Mammary epithelial cell (primary cell): ENCODE measurements at regions of chr1 and their contacts with region 1.

Region 1: DNA sequence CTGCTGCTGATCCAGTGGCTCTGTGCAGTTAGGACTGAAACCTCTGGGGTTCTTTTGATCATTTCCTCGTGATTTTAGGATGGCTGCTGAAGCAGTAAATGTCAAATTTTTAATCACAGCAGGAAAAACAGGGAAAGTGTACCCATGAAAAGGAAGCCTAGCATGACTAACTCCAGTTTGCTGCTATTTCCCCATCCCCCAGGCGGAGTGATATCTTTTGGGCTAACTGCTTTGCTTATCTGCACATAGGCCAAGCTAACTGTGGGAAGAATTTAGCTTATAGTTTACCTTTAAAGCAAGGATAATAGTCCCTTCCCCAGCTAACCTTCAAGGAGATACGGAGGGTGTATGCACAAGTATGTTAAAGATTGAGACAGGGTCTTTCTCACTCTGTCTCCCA is 149.8 kb upstream of the TNR start:
- DNase-seq: no peak
- H3K4me3 ChIP-seq: no peak overlapping the region
- H3K27ac ChIP-seq: no peak overlapping the region
- H3K4me1 ChIP-seq: no peaks in the 10 kb centered on the region
- H3K27me3 ChIP-seq: no peaks in the 10 kb centered on the region
- CTCF ChIP-seq: no peak

Region 2: GRCh38 chr1:175830500-175830899 is 62.7 kb before region 1 on chr1:
- CTCF ChIA-PET with region 1: no interaction called
- dilution Hi-C with region 1: loop called (anchors 5 kb)
- in situ Hi-C with region 1: no loop called
- intact Hi-C with region 1: no loop called
- DNase-seq: peak; percentile 25
- H3K4me3 ChIP-seq: no peak overlapping the region
- H3K27ac ChIP-seq: no peak overlapping the region
- H3K4me1 ChIP-seq: no peaks in the 10 kb centered on the region
- H3K27me3 ChIP-seq: no peaks in the 10 kb centered on the region
- CTCF ChIP-seq: no peak

Region 3: DNA sequence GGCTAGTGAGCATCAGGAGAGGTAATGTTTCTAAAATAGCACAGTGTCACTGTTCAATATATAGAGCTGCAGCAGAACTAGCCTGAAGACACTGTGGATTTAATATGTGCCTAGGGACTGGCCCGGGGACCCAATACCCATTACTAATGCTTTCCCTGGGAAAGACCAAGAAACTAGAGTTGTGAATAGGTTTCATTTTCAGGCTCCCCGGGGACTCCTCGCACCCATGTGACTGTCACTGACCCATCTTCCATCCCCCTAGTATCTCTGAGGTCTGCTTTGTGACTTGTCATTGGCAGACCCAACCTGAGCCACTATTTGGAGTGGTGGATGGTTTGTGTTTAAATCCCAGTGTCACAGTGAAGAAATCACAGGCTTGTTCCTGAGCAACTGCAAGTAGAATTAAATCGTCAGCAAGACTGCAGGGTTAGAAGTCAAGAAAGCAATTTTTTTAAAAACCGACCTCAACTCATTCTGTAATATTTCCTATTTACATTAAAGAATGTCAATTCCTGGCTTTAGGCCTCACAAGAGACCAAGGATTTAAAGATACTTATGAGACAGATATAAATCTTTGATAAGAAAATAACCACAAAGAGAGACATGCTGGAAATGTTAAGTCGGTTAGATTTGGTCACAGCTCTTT is 19.8 kb before region 1 on chr1:
- CTCF ChIA-PET with region 1: no interaction called
- dilution Hi-C with region 1: no loop called
- in situ Hi-C with region 1: no loop called
- intact Hi-C with region 1: loop called (anchors 1 kb)
- DNase-seq: no peak
- H3K4me3 ChIP-seq: no peak overlapping the region
- H3K27ac ChIP-seq: no peak overlapping the region
- H3K4me1 ChIP-seq: no peaks in the 10 kb centered on the region
- H3K27me3 ChIP-seq: no peaks in the 10 kb centered on the region
- CTCF ChIP-seq: no peak

Region 4: GRCh38 chr1:176252191-176252590 is 359.0 kb after region 1 on chr1:
- CTCF ChIA-PET with region 1: no interaction called
- dilution Hi-C with region 1: no loop called
- in situ Hi-C with region 1: no loop called
- intact Hi-C with region 1: no loop called
- DNase-seq: no peak
- H3K4me3 ChIP-seq: no peak overlapping the region
- H3K27ac ChIP-seq: no peak overlapping the region
- H3K4me1 ChIP-seq: no peaks in the 10 kb centered on the region
- H3K27me3 ChIP-seq: no peaks in the 10 kb centered on the region
- CTCF ChIP-seq: no peak